HEK293 (cell line): ENCODE measurements at regions of chr5 and their contacts with region 1.

Region 1: GRCh38 chr5:103842936-103843335 is 280.3 kb upstream of the NUDT12 start:
- H3K4me3 ChIP-seq: no peak overlapping the region
- H3K27ac ChIP-seq: no peak overlapping the region
- H3K4me1 ChIP-seq: no peaks in the 10 kb centered on the region
- CTCF ChIP-seq: no peak

Region 2: GRCh38 chr5:103829585-103829984 is 13.4 kb before region 1 on chr5:
- CTCF ChIA-PET with region 1: interaction called, 13 read pairs
- POLR2A ChIA-PET with region 1: no interaction called
- H3K4me3 ChIP-seq: no peak overlapping the region
- H3K27ac ChIP-seq: no peak overlapping the region
- H3K4me1 ChIP-seq: no peaks in the 10 kb centered on the region
- CTCF ChIP-seq: no peak

Region 3: GRCh38 chr5:104139840-104140239 is 296.9 kb after region 1 on chr5:
- CTCF ChIA-PET with region 1: no interaction called
- POLR2A ChIA-PET with region 1: no interaction called
- H3K4me3 ChIP-seq: no peak overlapping the region
- H3K27ac ChIP-seq: no peak overlapping the region
- H3K4me1 ChIP-seq: no peaks in the 10 kb centered on the region
- CTCF ChIP-seq: no peak